Esophagus muscularis mucosa (tissue), 4 donors: ENCODE measurements at regions of chr1 and their contacts with region 1.

Region 1: DNA sequence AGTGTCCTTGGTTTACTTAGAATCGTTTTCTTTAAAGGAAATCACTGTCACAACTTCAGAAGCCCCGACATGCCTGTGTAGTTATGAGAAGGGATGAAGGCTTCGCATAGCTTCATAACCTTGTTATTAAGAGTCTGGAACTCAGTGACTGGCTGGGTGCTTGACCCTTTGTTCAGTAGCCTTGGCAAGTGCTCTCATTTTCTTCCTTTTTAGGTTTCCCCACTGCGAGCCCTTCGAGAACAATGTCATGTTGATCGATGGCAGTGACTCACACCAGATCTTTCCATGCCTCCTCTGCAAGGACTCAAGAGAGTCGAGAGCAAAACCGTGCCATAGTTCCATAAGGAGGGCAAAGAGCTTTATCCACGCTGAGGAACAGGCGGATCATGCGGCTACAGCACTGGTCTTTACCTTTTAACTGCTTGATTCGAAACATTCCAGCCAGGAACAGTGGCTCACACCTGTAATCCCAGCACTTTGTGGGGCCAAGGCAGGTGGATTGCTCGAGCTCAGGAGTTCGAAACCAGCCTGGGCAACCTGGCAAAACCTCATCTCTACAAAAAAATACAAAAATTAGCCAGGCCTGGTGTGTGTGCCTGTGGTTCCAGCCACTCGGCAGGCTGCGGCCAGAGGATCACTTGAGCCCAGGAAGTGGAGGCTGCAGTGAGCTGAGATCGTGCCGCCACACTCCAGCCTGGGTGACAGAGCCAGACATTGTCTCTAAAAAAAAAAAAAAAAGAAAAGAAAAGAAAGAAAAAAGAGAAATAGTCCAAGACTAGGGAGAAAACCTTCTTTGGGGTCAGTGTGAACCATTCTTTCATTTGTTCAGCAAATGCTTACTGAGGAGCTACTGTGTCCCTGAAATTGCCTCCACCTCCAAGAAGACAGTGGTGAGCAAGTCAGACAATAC is 95.4 kb upstream of the ERRFI1 start:
- DNase-seq: peak; percentile 97
- H3K4me3 ChIP-seq: peak overlapping the region in 3 of 4 donors; percentile 34 to 44 (median 36)
- H3K27ac ChIP-seq: peak overlapping the region; percentile 91 to 97 (median 94)
- H3K4me1 ChIP-seq: peaks cover 41 to 78% (median 72%) of the 10 kb centered on the region in 4 donors
- H3K27me3 ChIP-seq: no peaks in the 10 kb centered on the region
- CTCF ChIP-seq: no peak
- EP300 ChIP-seq: peak; percentile 94
- POLR2A ChIP-seq: no peak

Region 2: GRCh38 chr1:8026153-8026975 is 95.2 kb before region 1 on chr1 and contains the start of gene ERRFI1:
- intact Hi-C with region 1: loop called (anchors 5 kb)
- DNase-seq: peak; percentile 98
- H3K4me3 ChIP-seq: peak within 1 kb of the TSS; percentile 89 to 97 (median 92)
- H3K27ac ChIP-seq: peak within 1 kb of the TSS; percentile 90 to 98 (median 95)
- H3K4me1 ChIP-seq: peaks cover 38 to 61% (median 53%) of the 10 kb centered on the region in 4 donors
- H3K27me3 ChIP-seq: no peaks in the 10 kb centered on the region
- CTCF ChIP-seq: peak in 1 of 3 experiments; percentile 27
- EP300 ChIP-seq: peak; percentile 3
- POLR2A ChIP-seq: peak; percentile 96
- total RNA-seq, gene ERRFI1: 308 to 587 (median 435) TPM

Region 3: GRCh38 chr1:8089535-8090228 is 31.8 kb before region 1 on chr1:
- intact Hi-C with region 1: loop called (anchors 5 kb)
- DNase-seq: no peak
- H3K4me3 ChIP-seq: no peak overlapping the region
- H3K27ac ChIP-seq: peak overlapping the region; percentile 72 to 80 (median 76)
- H3K4me1 ChIP-seq: peaks cover 4 to 29% (median 23%) of the 10 kb centered on the region in 4 donors
- H3K27me3 ChIP-seq: no peaks in the 10 kb centered on the region
- CTCF ChIP-seq: no peak
- EP300 ChIP-seq: no peak
- POLR2A ChIP-seq: no peak

Region 4: GRCh38 chr1:8202182-8202905 is 80.8 kb after region 1 on chr1:
- intact Hi-C with region 1: loop called (anchors 5 kb)
- DNase-seq: no peak
- H3K4me3 ChIP-seq: peak overlapping the region; percentile 14 to 43 (median 28)
- H3K27ac ChIP-seq: peak overlapping the region; percentile 96 to 98 (median 98)
- H3K4me1 ChIP-seq: peaks cover 33 to 92% (median 84%) of the 10 kb centered on the region in 4 donors
- H3K27me3 ChIP-seq: no peaks in the 10 kb centered on the region
- CTCF ChIP-seq: no peak
- EP300 ChIP-seq: peak; percentile 95
- POLR2A ChIP-seq: no peak